AG04450 (cell line): ENCODE measurements at regions of chr1 and their contacts with region 1.

Region 1: GRCh38 chr1:90721210-90722194 is 4.4 kb upstream of the BARHL2 start:
- DNase-seq: peak; percentile 7
- H3K4me3 ChIP-seq: no peak overlapping the region
- H3K27ac ChIP-seq: no peak overlapping the region
- H3K27me3 ChIP-seq: peaks cover 82% of the 10 kb centered on the region
- CTCF ChIP-seq: peak; percentile 93

Region 2: GRCh38 chr1:90850898-90851710 is 129.6 kb after region 1 on chr1:
- CTCF ChIA-PET with region 1: interaction called, 13 read pairs
- POLR2A ChIA-PET with region 1: no interaction called
- DNase-seq: peak; percentile 10
- H3K4me3 ChIP-seq: peak overlapping the region; percentile 68
- H3K27ac ChIP-seq: no peak overlapping the region
- H3K27me3 ChIP-seq: peaks cover 21% of the 10 kb centered on the region
- CTCF ChIP-seq: peak; percentile 53

Region 3: GRCh38 chr1:90964444-90965035 is 243.0 kb after region 1 on chr1:
- CTCF ChIA-PET with region 1: interaction called, 31 read pairs
- POLR2A ChIA-PET with region 1: no interaction called
- DNase-seq: no peak
- H3K4me3 ChIP-seq: no peak overlapping the region
- H3K27ac ChIP-seq: no peak overlapping the region
- H3K27me3 ChIP-seq: no peaks in the 10 kb centered on the region
- CTCF ChIP-seq: peak; percentile 45

Region 4: DNA sequence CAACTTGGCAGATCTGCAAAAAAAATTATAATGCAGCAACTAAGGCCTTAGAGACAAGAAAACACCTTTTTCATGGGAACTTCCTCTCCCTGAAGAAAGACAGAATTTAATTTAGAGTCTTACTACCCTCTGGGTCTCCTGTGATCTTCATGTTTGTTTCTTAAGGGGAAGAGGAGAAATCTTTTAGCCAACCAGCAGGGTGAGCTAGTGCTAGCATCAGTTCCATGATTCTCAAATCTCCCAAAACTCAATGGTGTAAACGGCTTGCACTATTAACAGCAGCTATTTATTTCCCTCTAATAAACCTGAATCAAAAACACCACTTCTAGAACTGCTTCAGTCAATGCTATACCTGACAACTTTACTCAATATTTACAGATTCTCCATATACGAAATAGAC is 296.5 kb after region 1 on chr1:
- CTCF ChIA-PET with region 1: interaction called, 13 read pairs
- POLR2A ChIA-PET with region 1: no interaction called
- DNase-seq: no peak
- H3K4me3 ChIP-seq: no peak overlapping the region
- H3K27ac ChIP-seq: no peak overlapping the region
- H3K27me3 ChIP-seq: no peaks in the 10 kb centered on the region
- CTCF ChIP-seq: peak; percentile 44

Region 5: DNA sequence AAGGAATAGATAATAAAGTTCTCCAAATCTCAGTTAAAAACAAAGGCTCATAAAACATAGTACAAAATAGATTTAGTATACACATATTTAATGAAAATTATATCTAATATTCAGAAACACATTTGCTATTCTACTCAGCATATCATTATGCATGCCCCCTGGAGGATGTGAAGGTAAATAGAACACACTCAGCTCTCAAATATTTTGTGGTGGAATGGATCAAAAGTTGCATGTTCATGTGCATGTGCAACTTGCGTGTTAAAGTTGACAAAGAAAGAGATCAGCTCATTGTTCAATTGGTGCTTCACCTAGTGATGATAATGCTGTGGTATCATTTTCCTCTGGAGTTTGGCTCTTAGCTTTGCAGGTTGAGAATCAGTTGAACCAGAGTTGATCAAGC is 305.3 kb after region 1 on chr1:
- CTCF ChIA-PET with region 1: interaction called, 10 read pairs
- POLR2A ChIA-PET with region 1: no interaction called
- DNase-seq: no peak
- H3K4me3 ChIP-seq: no peak overlapping the region
- H3K27ac ChIP-seq: no peak overlapping the region
- H3K27me3 ChIP-seq: no peaks in the 10 kb centered on the region
- CTCF ChIP-seq: peak; percentile 43